ENCODE measurements at regions of chr2 and their contacts with region 1.

Region 1: DNA sequence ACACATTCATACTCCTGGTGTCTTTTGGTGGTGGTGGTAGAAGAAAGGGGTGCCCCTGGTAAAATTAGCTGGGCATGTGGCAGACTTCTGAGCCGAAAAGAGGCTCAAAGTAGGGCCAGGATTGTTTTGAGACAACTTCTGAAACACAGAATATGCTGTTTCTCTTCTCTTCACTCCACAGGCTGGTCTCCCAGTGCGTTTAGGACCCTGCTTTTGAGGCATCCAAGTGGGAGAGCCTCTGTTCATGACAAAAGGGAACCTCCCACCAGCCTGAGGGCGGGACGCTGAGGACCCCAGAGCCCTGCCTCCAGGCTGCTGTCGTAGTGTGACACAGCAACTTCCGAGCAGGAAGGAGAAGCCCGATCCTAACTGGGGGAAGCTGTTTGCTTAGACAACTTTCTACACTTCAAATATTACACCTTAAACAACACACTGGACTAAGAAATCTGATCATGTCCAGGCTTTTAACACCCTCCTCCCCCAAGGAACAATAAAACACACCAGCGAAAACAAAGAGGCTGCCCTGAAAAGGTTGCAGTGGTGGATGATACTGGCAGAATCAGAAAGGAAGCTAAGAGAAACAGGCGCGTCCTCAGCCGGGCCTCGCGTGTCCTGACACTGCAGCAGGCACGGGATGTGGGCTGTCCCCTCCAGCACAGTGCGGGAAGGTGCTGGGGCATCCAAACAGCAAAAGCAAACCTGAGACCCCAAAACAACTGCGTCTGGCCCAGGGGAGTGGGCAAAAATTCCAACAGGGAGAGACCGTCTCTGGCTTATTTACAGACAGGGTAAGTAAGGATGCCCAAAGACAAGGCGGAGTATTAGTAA is 9.3 kb downstream of the SERTAD2 start:
- DNase-seq: peak; percentile 88
- H3K4me3 Mint-ChIP-seq: peak overlapping the region; percentile 84
- H3K27ac Mint-ChIP-seq: peak overlapping the region; percentile 92
- H3K4me1 Mint-ChIP-seq: peaks cover 77% of the 10 kb centered on the region
- H3K27me3 Mint-ChIP-seq: no peaks in the 10 kb centered on the region

Region 2: DNA sequence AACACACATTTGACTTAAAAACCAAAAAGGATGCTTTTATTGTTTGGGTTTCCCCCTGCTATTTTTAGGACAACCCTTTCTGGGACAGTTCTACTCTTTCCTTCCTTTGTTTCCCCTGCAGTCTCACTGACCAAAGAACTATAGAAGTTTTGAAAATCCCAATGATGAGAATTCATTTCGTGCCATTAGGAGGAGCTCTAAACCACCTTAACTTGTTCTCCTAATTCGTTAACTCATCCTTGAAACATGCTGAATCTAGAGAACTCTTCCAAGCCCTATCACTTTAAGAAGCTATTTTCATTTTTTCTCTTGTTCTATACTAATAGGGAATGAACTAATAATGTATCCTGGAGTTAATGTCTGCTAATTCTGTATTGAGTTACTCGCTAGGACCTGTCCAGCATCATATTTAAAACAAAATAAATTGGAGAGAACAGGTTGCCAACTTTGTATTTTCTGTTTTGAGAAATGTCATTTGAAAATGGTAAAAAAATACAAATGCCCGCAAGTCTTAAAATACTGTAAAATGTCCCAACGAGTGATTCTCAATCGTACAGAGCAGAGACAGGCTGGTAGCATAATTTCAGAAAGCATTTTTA is 57.4 kb before region 1 on chr2:
- intact Hi-C with region 1: loop called (anchors 5 kb)
- DNase-seq: peak; percentile 66
- H3K4me3 Mint-ChIP-seq: no peak overlapping the region
- H3K27ac Mint-ChIP-seq: no peak overlapping the region
- H3K4me1 Mint-ChIP-seq: peaks cover 19% of the 10 kb centered on the region
- H3K27me3 Mint-ChIP-seq: no peaks in the 10 kb centered on the region

Region 3: DNA sequence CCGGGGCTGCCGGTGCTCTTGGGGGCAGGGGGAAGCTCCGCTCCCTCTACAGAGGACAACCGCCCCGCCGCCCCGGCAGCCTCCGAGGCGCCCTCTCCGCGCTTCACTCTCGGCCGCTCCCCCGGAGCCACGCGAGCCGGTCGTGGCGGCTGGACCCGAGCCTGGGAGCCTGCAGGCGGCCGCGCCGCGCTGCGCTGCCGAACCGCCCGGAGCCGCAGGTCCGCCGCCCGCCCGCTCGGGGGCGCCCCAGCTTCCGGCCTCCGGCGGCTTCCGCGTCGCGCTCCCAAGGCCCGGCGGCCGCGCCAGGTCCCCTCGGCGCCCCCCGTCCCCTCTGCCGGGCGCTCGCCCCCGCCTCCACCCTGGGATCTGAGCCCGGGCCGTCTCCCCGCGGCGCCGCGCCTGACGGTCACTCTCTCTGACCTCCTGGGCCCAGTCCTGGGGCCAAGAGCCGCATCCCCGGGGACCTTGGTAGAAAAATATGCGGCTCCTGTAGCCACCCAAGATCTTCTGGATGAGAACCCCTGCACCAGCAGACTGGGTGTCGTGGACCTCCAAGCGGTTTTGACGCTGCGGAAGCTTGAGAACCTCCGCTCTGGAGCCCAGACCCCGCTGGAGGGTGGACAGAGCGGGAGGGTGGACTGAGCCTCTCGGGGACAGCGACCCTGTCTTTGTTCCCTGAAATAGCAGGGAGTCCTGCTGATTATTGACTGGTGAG is 35.0 kb before region 1 on chr2:
- intact Hi-C with region 1: loop called (anchors 2 kb)
- DNase-seq: peak; percentile 93
- H3K4me3 Mint-ChIP-seq: peak overlapping the region; percentile 76
- H3K27ac Mint-ChIP-seq: peak overlapping the region; percentile 74
- H3K4me1 Mint-ChIP-seq: peaks cover 24% of the 10 kb centered on the region
- H3K27me3 Mint-ChIP-seq: peaks cover 20% of the 10 kb centered on the region

Region 4: DNA sequence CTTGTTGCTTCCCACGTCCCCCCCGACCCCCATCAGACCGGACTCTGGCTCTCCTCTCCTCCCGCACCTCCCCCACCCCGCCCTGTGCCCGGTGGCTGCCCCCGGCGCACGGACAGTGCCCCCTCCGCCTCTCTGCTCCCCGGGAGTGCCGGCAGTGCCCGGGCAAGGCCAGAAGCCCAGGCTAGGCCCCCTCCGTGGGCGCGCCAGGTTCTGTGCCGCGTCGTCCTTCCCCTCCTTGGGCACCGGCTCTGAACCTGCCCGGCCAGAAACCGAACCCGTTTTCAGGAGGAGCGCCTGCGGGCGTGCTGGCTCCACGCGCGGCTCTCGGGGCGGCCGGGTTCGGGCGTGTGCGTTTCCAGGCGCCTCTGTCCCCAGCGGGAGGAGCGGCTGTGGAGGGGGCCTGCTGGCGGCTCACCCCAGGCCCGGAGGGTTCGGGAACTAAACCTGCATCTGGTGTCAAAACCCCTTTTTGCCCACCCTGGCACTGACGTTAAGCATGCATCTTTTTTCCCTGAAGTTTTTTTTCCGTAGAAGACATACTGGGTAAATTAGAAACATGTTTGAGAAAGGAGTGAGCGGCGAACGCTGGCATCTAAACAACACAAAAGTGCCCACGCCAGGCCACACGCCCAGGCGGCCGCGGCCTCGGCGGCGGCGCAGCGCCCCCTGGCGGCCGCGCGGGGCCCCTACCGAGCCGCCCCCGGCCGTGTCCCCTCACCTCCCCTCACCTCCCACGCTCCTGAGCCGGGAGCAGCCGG is 220.9 kb after region 1 on chr2:
- intact Hi-C with region 1: loop called (anchors 1 kb)
- DNase-seq: peak; percentile 91
- H3K4me3 Mint-ChIP-seq: peak overlapping the region; percentile 73
- H3K27ac Mint-ChIP-seq: no peak overlapping the region
- H3K4me1 Mint-ChIP-seq: peaks cover 3% of the 10 kb centered on the region
- H3K27me3 Mint-ChIP-seq: peaks cover 14% of the 10 kb centered on the region

Measured in activated CD4-positive, alpha-beta T cell treated with anti-CD3 and anti-CD28 coated beads, Interleukin-2, amount 10 ng/mL, durations not matched to agents 24 days and 14 days (primary cell).